Activated CD4-positive, alpha-beta T cell treated with anti-CD3 and anti-CD28 coated beads for 36 hours (primary cell): ENCODE measurements at regions of chr18 and their contacts with region 1.

Region 1: GRCh38 chr18:49510393-49511115 is 23.5 kb upstream of the C18orf32 start:
- DNase-seq: peak; percentile 70
- ATAC-seq: peak; percentile 61
- H3K4me3 Mint-ChIP-seq: no peak overlapping the region
- H3K27ac Mint-ChIP-seq: no peak overlapping the region
- H3K4me1 Mint-ChIP-seq: no peaks in the 10 kb centered on the region
- H3K27me3 Mint-ChIP-seq: peaks cover 10% of the 10 kb centered on the region

Region 2: DNA sequence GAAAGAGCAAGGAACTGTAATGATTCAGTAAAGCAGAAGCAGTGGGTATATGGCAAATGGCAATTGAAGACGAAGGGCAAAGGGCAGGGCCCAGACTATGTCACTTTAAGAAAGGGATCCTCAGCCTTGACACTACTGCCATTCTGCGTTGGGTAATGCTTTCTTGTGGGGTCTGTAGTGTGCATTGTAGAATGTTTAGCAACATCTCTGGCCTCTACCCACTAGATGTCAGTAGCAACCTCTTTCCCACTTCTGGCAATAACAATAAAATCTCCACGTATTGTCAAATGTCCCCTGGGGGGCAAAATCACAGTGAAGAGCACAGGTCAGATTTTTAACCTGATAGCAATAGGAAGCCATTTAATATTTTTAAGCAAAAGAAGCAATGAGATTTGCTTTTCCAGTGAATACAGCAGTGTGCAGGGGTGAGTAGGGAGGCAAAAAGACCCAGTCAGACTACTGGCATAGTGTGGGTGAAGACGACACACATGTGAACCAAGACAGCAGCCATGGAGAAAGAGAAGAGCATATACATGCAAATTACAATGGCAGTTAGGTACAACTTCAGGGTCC is 259.7 kb before region 1 on chr18:
- CTCF ChIA-PET with region 1: no interaction called
- POLR2A ChIA-PET with region 1: no interaction called
- intact Hi-C with region 1: no loop called
- DNase-seq: peak; percentile 35
- ATAC-seq: no peak
- H3K4me3 Mint-ChIP-seq: no peak overlapping the region
- H3K27ac Mint-ChIP-seq: no peak overlapping the region
- H3K4me1 Mint-ChIP-seq: no peaks in the 10 kb centered on the region
- H3K27me3 Mint-ChIP-seq: no peaks in the 10 kb centered on the region

Region 3: DNA sequence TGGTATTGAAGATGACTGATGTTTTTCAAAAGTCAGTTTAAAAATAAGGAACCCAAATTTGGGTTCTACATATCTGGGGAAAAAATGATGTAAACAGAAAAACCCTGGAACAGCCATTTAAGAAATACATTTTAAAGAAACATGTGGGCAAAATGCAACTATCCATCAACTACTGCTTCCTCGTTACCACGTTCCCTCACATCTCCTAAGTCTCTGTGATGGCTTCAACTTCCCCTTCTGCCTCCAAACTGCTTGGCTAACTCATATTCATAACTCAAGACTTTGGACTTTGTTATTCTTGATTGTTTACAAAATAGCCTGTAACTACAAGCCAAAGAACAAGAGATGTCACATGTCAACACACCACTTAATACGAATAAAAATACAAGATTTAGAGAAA is 166.5 kb before region 1 on chr18:
- CTCF ChIA-PET with region 1: no interaction called
- POLR2A ChIA-PET with region 1: no interaction called
- intact Hi-C with region 1: no loop called
- DNase-seq: no peak
- ATAC-seq: no peak
- H3K4me3 Mint-ChIP-seq: no peak overlapping the region
- H3K27ac Mint-ChIP-seq: no peak overlapping the region
- H3K4me1 Mint-ChIP-seq: peaks cover 11% of the 10 kb centered on the region
- H3K27me3 Mint-ChIP-seq: no peaks in the 10 kb centered on the region

Region 4: GRCh38 chr18:49495076-49495475 is 15.5 kb before region 1 on chr18:
- CTCF ChIA-PET with region 1: interaction called, 11 read pairs
- POLR2A ChIA-PET with region 1: no interaction called
- intact Hi-C with region 1: no loop called
- DNase-seq: no peak
- ATAC-seq: no peak
- H3K4me3 Mint-ChIP-seq: no peak overlapping the region
- H3K27ac Mint-ChIP-seq: no peak overlapping the region
- H3K4me1 Mint-ChIP-seq: peaks cover 16% of the 10 kb centered on the region
- H3K27me3 Mint-ChIP-seq: peaks cover 3% of the 10 kb centered on the region